A673 (cell line): ENCODE measurements at regions of chrX and their contacts with region 1.

Region 1: GRCh38 chrX:110146521-110146920 is 143.6 kb downstream of the TMEM164 start:
- DNase-seq: peak; percentile 64
- H3K4me3 ChIP-seq: no peak overlapping the region
- H3K27ac ChIP-seq: no peak overlapping the region
- H3K4me1 ChIP-seq: no peaks in the 10 kb centered on the region
- H3K27me3 ChIP-seq: no peaks in the 10 kb centered on the region
- CTCF ChIP-seq: peak; percentile 72

Region 2: DNA sequence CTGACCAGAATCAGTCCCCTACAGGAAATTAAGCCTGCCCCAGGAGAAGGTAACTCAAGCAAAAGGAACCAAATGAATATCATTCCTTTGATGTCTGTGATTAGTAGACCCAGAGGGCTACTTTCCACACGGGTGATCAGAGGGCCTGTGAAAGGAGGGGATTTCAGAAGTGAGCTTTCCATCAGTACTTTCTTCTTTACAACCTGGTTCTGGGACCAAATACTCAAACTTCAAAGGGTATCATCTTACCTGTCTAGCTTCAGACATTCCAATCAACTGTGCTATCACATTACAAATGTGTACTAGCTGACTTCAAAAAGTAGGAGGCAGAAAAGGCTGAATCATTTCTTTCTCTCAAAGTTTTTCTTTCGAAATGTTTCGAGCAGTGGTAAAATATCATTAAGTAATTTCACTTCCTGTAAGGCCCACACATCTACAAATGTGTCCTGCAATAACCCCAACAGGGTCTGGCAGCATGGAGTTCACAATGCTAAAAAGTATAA is 437.3 kb before region 1 on chrX:
- CTCF ChIA-PET with region 1: interaction called, 5 read pairs
- POLR2A ChIA-PET with region 1: interaction called, 19 read pairs
- intact Hi-C with region 1: no loop called
- DNase-seq: peak; percentile 45
- H3K4me3 ChIP-seq: peak overlapping the region; percentile 0
- H3K27ac ChIP-seq: peak overlapping the region; percentile 58
- H3K4me1 ChIP-seq: peaks cover 10% of the 10 kb centered on the region
- H3K27me3 ChIP-seq: no peaks in the 10 kb centered on the region
- CTCF ChIP-seq: no peak

Region 3: GRCh38 chrX:109911046-109911445 is 235.5 kb before region 1 on chrX:
- CTCF ChIA-PET with region 1: no interaction called
- POLR2A ChIA-PET with region 1: no interaction called
- intact Hi-C with region 1: loop called (anchors 2 kb)
- DNase-seq: no peak
- H3K4me3 ChIP-seq: no peak overlapping the region
- H3K27ac ChIP-seq: no peak overlapping the region
- H3K4me1 ChIP-seq: no peaks in the 10 kb centered on the region
- H3K27me3 ChIP-seq: no peaks in the 10 kb centered on the region
- CTCF ChIP-seq: peak; percentile 61

Region 4: DNA sequence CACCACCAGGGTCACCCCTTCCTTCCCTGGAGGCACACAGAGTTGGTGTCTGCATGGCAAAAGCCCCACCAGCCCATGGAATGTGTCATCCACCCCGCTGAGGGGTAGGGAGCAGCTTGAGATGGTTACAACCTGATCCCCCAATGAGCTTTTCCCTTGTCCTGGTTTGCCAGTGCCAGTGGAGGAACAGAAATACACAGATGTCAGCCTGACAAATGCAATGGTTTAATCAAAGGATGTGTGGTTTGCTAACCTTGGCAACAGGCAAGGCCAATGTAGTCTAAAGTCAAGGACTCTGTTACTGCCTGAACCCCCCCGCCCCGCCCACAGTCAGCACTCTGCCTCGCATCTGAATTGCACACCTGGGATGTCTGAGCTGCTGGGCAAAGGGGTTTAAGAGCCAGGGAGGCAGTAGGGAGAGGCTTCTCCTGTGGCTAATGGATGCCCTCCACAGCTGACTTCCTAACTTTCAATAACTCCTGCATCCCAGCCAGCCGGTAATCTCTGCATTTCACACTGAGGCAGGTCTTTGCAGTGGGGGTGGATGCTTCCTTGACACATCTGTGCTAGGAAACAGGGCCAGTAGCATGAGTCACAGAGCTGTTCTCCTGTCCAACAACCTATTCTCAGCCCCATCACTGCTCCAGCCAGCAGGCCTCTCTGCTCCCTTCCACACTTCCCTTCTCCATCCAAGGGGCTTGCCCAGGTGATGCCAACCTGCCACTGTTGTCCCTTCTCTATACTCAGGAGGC is 33.8 kb after region 1 on chrX:
- CTCF ChIA-PET with region 1: no interaction called
- POLR2A ChIA-PET with region 1: no interaction called
- intact Hi-C with region 1: no loop called
- DNase-seq: no peak
- H3K4me3 ChIP-seq: no peak overlapping the region
- H3K27ac ChIP-seq: no peak overlapping the region
- H3K4me1 ChIP-seq: peaks cover 12% of the 10 kb centered on the region
- H3K27me3 ChIP-seq: no peaks in the 10 kb centered on the region
- CTCF ChIP-seq: no peak

Region 5: DNA sequence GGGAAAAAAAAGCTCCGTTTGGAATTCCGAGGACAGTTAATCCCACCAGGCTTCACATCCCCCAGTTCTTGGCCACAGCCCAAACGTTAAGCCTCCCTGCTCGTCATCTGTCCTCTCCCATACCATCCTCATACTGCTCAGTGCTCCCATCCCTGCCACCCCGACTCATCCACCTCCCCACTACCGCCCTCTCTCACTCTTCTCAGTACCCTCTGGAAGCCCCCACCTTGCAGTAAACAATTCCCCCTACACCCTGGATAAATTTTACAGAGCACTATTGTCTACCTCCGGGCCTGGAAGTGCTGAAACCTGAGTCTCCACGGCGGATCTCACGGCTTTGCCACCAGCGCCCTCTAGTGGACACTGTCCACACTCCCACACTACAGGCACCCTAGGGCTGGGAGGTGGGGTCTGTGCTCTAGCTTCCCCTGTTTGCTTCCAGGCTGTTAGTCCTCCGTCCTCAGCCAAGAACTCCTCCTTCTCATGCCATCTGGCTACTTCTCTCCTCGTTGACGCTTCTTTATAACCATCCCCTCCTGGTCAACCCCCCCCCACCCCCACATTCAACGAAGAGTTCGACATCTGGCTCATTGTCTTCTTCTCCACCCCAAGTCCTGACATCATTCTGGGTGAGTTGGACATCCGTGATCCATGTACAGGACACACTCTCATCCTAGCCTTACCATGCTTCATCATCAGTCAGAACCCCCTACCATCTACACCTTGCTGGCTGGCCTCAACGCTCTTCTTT is 266.6 kb after region 1 on chrX:
- CTCF ChIA-PET with region 1: interaction called, 24 read pairs
- POLR2A ChIA-PET with region 1: no interaction called
- intact Hi-C with region 1: no loop called
- DNase-seq: peak; percentile 83
- H3K4me3 ChIP-seq: peak overlapping the region; percentile 27
- H3K27ac ChIP-seq: no peak overlapping the region
- H3K4me1 ChIP-seq: peaks cover 4% of the 10 kb centered on the region
- H3K27me3 ChIP-seq: no peaks in the 10 kb centered on the region
- CTCF ChIP-seq: peak; percentile 94

Region 6: DNA sequence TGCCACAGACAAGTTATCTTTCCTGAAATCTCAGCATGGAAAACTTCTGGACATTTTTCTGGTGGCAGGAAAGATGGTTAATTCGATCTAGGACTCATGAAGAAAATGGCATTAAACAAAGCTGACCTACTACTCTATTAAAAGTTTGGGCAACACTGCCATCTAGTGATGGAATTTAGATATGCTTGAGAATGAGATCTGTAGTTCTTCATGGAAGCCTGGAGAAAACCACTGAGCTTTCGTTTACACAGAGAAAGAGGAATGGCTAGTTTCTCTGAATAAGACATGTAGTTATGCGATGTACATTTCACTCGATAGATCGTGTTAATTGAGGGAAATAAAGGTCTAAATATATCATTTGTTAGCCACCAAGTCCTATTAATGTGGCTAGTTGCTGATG is 700.8 kb after region 1 on chrX:
- CTCF ChIA-PET with region 1: no interaction called
- POLR2A ChIA-PET with region 1: no interaction called
- intact Hi-C with region 1: loop called (anchors 5 kb)
- DNase-seq: peak; percentile 77
- H3K4me3 ChIP-seq: no peak overlapping the region
- H3K27ac ChIP-seq: no peak overlapping the region
- H3K4me1 ChIP-seq: no peaks in the 10 kb centered on the region
- H3K27me3 ChIP-seq: no peaks in the 10 kb centered on the region
- CTCF ChIP-seq: peak; percentile 67